Panc1 (cell line): ENCODE measurements at regions of chr10 and their contacts with region 1.

Region 1: DNA sequence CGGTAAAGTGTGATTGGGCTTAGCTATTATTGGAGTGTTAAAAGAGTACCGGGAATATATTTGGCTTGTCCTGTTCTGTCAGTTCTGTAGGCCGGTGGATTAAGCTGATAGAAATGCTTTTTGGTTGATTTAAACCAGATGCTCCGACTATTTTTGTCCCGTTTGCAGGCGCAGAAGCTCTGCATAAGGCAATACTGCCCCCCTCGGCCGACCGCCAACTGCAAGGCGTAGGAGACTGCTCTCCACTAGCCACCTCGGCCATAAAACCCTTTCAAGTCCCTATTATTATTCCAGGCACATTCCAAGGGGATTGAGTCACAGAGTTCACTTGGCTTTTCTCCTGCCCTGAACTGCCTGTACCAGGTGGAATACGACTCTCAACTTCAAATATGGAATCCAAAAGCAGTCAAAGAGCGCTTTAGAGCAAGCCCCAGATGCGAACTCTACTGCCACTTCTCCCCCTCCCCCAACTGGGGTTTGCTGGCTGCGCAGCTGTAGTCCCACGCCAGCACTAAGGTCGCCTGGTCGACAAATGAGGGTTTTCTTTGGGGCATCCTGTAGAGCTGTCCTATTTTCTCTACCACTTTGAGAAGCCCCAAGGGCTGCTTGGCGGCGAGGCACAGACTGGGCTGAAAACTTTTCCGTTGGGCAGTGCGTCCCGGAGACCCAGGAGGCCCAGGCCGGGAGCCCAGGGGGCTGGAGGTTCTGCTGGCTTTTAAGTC is 108.3 kb downstream of the REEP3 start:
- DNase-seq: peak; percentile 97
- ATAC-seq: peak; percentile 83
- H3K4me3 ChIP-seq: peak overlapping the region; percentile 72 to 88
- H3K27ac ChIP-seq: peak overlapping the region; percentile 99
- H3K4me1 ChIP-seq: peaks cover 43% of the 10 kb centered on the region
- H3K27me3 ChIP-seq: no peaks in the 10 kb centered on the region
- CTCF ChIP-seq: peak; percentile 95

Region 2: GRCh38 chr10:63166742-63167258 is 462.7 kb before region 1 on chr10:
- CTCF ChIA-PET with region 1: interaction called, 8 read pairs
- POLR2A ChIA-PET with region 1: no interaction called
- in situ Hi-C with region 1: no loop called
- intact Hi-C with region 1: loop called (anchors 2 kb)
- DNase-seq: peak; percentile 57
- ATAC-seq: peak; percentile 82
- H3K4me3 ChIP-seq: no peak overlapping the region
- H3K27ac ChIP-seq: no peak overlapping the region
- H3K4me1 ChIP-seq: no peaks in the 10 kb centered on the region
- H3K27me3 ChIP-seq: no peaks in the 10 kb centered on the region
- CTCF ChIP-seq: peak; percentile 83

Region 3: GRCh38 chr10:63268798-63269503 is 360.6 kb before region 1 on chr10:
- CTCF ChIA-PET with region 1: no interaction called
- POLR2A ChIA-PET with region 1: interaction called, 12 read pairs
- in situ Hi-C with region 1: no loop called
- intact Hi-C with region 1: loop called (anchors 2 kb)
- DNase-seq: peak; percentile 98
- ATAC-seq: peak; percentile 96
- H3K4me3 ChIP-seq: peak overlapping the region; percentile 77 to 91
- H3K27ac ChIP-seq: peak overlapping the region; percentile 95
- H3K4me1 ChIP-seq: peaks cover 18% of the 10 kb centered on the region
- H3K27me3 ChIP-seq: no peaks in the 10 kb centered on the region
- CTCF ChIP-seq: no peak

Region 4: DNA sequence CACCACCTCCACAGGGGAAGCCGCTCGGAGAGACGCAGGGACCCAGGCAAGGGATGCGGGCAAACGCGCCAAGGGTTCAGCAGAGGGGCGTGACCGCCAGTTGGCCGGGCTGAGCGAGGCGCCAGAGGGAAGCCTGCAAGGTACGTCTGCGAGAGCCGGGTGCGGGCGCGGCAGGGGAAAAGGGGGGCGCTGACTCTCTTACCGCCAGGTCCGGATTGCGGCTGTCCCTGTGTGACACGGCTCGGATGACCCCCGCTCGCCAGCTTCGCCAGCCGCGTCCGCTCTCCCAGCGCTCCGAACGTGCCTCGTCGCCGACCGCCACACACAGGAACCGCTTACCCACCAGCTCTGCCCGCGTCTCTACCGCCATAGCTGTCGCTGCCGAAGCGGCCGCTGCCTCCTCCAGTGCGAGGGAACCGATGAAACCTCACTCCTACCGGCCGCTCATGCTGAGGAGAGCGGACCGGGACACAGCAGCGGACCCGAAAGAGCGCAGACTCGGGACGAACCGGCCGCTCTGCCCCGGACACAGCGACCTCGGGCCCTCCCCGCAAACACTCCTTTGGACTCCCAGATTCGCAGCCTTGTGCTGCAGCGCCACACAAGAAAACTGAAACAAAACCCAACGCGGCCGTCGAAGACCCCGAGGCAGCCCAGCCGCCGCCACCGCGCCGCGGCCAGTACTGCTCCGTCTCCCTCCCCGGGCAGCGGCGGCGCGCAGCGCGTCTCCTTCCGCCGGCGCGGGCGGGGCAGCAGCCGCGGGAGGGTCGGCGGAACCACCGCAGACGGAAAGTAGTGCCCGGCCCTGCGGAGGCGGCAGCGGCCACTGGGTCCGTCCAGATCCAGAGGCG is 164.0 kb before region 1 on chr10 and contains the start of gene JMJD1C:
- CTCF ChIA-PET with region 1: no interaction called
- POLR2A ChIA-PET with region 1: interaction called, 3 read pairs
- in situ Hi-C with region 1: no loop called
- intact Hi-C with region 1: loop called (anchors 1 kb)
- DNase-seq: no peak
- ATAC-seq: peak; percentile 88
- H3K4me3 ChIP-seq: peak within 1 kb of the TSS; percentile 78 to 81
- H3K27ac ChIP-seq: peak within 1 kb of the TSS; percentile 98
- H3K4me1 ChIP-seq: peaks cover 33% of the 10 kb centered on the region
- H3K27me3 ChIP-seq: no peaks in the 10 kb centered on the region
- CTCF ChIP-seq: peak; percentile 29
- total RNA-seq, gene JMJD1C: 88.3 TPM

Region 5: DNA sequence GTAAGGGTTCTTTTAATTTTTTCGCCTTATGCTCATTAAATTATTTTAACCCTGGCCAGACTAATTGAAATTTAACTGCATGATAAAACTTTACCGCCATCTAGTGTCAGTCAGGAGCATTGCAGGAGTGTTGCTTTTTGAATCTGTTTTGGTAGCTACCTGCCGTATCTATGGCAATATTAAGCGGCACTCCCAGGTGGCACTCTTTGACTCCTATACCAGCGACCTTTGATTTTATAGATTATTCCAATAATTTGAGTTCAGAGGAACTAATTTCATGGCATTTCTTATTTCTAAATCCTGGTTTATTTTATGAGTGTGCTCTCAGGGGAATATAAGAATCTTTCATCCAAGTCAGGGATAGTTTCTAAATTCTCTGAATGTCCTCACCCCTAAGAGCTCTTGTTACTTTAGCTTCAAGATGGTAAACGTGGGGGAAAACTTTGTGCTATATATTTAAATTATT is 90.6 kb after region 1 on chr10:
- CTCF ChIA-PET with region 1: interaction called, 32 read pairs
- POLR2A ChIA-PET with region 1: interaction called, 6 read pairs
- in situ Hi-C with region 1: no loop called
- intact Hi-C with region 1: no loop called
- DNase-seq: no peak
- ATAC-seq: peak; percentile 56; the same call in 1 of the 2 replicates
- H3K4me3 ChIP-seq: no peak overlapping the region
- H3K27ac ChIP-seq: no peak overlapping the region
- H3K4me1 ChIP-seq: peaks cover 29% of the 10 kb centered on the region
- H3K27me3 ChIP-seq: no peaks in the 10 kb centered on the region; the same call in 1 of the 2 replicates
- CTCF ChIP-seq: peak; percentile 97